Activated naive CD4-positive, alpha-beta T cell treated with anti-CD3 and anti-CD28 coated beads for 36 hours (primary cell): ENCODE measurements at regions of chr10 and their contacts with region 1.

Region 1: DNA sequence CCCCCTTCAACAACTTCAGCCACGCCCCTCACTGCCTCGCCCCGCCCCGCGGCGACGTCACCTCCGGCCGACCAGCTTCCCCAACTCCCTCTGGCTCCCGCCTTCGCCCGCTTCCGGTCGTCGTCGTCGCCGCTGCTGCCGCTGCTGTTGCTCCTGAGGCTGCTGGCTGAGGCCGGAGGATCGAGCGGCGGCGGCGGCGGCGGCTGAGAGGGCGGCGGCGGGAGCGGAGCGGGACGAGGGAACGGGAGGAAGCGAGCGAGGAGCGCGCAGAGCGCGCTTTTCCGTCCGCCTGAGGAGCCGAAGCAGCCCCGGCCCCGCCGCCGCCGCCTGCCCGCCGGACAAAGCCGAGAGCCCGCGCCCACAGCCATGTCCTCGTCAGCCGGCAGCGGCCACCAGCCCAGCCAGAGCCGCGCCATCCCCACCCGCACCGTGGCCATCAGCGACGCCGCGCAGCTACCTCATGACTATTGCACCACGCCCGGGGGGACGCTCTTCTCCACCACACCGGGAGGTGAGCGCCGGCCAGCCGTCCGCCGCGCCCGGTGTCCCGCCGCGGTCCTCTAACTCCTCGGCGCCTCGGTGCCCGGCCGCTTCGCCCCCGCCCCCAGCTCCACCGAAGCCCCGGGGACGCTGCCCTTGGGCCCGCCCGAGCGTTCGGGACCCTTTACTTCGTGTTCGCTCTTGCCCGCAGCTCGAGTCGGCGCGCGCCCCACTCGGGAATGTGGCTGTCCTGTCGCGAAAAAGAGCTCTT is at the start of gene EIF4EBP2:
- DNase-seq: peak; percentile 99
- H3K4me3 Mint-ChIP-seq: peak within 1 kb of the TSS; percentile 98
- H3K27ac Mint-ChIP-seq: peak within 1 kb of the TSS; percentile 90
- H3K4me1 Mint-ChIP-seq: peaks cover 37% of the 10 kb centered on the region
- H3K27me3 Mint-ChIP-seq: no peaks in the 10 kb centered on the region
- total RNA-seq, gene EIF4EBP2: 20.0 to 21.0 TPM

Region 2: DNA sequence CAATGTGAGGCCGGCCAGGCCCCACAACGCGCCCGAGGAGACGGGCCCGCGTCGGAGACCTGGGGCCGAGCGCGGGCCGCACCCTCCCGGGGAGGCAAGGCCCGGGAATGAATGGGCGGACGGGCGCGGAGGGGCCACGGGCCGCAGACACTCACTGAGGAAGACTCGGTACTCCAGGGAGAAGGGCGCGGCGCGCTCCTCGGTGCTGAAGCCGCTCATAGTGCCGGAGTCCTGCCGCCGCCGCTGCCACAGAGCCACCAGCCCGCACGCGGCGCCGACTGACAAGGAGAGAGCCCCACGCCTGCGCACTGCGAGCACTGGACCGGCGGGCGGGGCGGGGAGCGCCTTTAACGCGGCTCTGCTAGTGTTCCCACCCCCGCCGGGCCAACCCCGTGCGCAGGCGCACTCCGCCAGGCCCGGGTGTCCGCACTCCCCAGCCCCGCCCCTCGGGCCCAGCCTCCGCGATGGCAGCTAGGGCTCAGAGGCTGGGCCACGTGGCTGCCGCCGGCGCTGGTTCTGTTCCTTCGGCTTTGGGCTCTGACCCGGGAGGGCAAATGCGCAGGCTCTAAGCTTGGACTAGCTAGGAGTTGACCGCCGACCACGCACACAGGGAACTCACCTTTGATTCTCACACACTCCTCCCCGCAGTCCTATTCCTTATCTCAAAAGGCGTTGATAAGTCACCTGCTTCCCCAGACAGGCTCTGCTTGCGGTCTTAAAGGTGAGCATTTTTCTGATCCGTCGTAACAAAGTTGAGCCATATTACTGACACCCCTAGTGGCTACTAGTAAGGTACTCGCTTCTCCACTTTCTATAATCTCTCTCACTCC is 170.9 kb before region 1 on chr10 and contains the start of gene PPA1:
- CTCF ChIA-PET with region 1: no interaction called
- intact Hi-C with region 1: loop called (anchors 1 kb)
- DNase-seq: peak; percentile 99
- H3K4me3 Mint-ChIP-seq: peak within 1 kb of the TSS; percentile 87
- H3K27ac Mint-ChIP-seq: peak within 1 kb of the TSS; percentile 93
- H3K4me1 Mint-ChIP-seq: peaks cover 36% of the 10 kb centered on the region
- H3K27me3 Mint-ChIP-seq: no peaks in the 10 kb centered on the region
- total RNA-seq, gene PPA1: 392 to 408 TPM

Region 3: DNA sequence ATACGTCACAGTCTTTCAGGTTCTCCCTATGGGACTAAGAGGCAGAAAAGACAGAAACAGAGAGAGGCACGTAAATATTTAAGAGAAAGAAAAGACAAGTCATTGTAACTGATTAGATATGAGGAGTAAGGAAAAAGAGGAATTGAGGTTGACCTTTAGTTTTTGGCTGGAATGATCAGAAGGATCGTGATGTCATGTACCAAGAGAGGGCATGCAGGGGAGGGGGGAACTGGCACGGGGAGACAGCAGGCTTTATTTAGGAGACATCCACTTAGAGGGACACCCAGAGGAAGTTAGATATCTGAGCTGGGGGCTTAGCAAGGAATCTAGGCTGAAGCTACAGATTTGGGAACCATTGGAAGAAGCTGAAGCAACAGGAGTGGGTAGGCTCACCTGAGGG is 12.6 kb before region 1 on chr10:
- CTCF ChIA-PET with region 1: interaction called, 12 read pairs
- intact Hi-C with region 1: loop called (anchors 1 kb)
- DNase-seq: no peak
- H3K4me3 Mint-ChIP-seq: no peak overlapping the region
- H3K27ac Mint-ChIP-seq: no peak overlapping the region
- H3K4me1 Mint-ChIP-seq: peaks cover 6% of the 10 kb centered on the region
- H3K27me3 Mint-ChIP-seq: peaks cover 12% of the 10 kb centered on the region

Region 4: DNA sequence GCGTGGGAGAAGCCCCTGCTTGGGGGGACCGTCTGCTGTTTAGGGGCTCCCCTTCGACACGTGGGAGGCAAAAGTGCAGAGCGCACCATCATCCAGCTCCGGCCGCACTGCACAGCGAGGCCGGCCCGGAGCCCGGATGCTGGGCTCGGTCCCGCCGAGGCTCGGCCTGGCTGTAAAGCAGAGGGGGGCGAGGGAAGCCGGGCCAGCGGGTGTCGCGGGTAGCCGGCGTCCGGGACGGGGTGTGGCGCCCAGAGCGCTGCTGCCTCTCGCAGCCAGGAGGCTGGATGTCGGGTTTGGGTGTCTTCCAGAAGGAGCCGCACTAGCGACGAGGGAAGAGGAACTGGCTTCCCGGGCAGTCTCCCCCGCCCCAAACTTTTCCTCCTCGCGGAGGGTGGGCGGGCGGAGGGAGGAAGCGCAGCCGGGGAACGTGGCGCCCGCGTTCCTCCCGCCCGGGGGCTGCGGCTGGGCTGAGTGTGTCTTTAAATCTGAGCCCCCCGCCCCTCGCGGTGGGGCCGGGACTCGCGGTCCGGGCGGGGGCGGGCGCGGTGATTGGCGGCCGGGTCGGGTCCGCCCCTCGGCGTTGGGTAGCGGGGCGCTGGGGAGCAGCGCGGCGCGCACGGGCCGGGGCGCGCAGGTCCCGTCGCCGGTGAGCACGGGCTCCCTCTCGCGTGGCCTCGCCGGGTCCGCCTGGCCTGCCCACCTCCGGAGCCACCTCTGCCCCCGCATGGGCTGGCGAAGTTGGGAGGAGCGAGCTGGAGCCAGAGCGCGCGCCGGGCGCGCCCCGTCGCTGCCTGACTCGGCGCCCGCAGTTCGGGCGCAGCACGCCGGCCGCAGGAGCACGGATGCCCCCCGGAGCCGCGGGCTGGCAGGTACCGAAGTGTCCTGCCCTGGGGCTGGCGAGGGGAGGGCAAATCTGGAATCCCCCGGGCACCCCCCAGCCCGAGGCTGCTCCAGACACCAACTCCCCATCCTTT is 74.3 kb after region 1 on chr10 and contains the start of gene PALD1:
- CTCF ChIA-PET with region 1: interaction called, 3 read pairs
- intact Hi-C with region 1: loop called (anchors 1 kb)
- DNase-seq: peak; percentile 42
- H3K4me3 Mint-ChIP-seq: peak within 1 kb of the TSS; percentile 74
- H3K27ac Mint-ChIP-seq: peak within 1 kb of the TSS; percentile 41
- H3K4me1 Mint-ChIP-seq: peaks cover 43% of the 10 kb centered on the region
- H3K27me3 Mint-ChIP-seq: peaks cover 29% of the 10 kb centered on the region
- total RNA-seq, gene PALD1: 0.69 TPM

Region 5: GRCh38 chr10:70820976-70821755 is 417.0 kb after region 1 on chr10:
- CTCF ChIA-PET with region 1: no interaction called
- intact Hi-C with region 1: loop called (anchors 1 kb)
- DNase-seq: peak; percentile 41
- H3K4me3 Mint-ChIP-seq: no peak overlapping the region
- H3K27ac Mint-ChIP-seq: peak overlapping the region; percentile 61
- H3K4me1 Mint-ChIP-seq: peaks cover 51% of the 10 kb centered on the region
- H3K27me3 Mint-ChIP-seq: no peaks in the 10 kb centered on the region

Region 6: GRCh38 chr10:70931168-70931815 is 527.1 kb after region 1 on chr10:
- CTCF ChIA-PET with region 1: no interaction called
- intact Hi-C with region 1: no loop called
- DNase-seq: no peak
- H3K4me3 Mint-ChIP-seq: no peak overlapping the region
- H3K27ac Mint-ChIP-seq: no peak overlapping the region
- H3K4me1 Mint-ChIP-seq: no peaks in the 10 kb centered on the region
- H3K27me3 Mint-ChIP-seq: no peaks in the 10 kb centered on the region